Calu3 (cell line): ENCODE measurements at regions of chr15 and their contacts with region 1.

Region 1: DNA sequence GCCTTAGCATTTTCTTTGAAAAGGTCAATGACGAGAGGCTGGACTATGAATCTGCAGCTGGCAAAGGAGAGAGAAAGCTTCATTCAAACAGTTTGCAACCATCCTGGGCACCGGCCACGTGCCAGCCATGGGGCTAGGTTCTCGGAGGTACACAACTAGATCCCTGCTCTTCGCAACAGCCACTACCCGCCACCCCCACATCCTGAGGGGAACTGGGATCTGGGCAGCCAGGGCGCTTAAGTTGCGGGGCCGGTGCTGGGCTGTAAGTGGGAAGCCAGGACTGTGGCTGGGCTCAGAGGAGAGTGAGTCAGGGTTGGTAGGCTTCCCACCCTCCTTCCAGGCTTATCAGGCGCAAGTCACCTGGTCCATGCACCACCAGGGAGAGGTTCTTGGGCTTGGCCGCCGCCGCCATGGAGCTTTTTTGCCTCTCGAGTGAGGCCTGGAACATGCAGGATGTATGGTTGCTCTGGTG is 95.0 kb upstream of the TERB2 start:
- DNase-seq: no peak
- H3K4me3 Mint-ChIP-seq: no peak overlapping the region
- H3K27ac Mint-ChIP-seq: no peak overlapping the region
- H3K4me1 Mint-ChIP-seq: peaks cover 9% of the 10 kb centered on the region
- H3K27me3 Mint-ChIP-seq: peaks cover 5% of the 10 kb centered on the region
- CTCF ChIP-seq: no peak

Region 2: DNA sequence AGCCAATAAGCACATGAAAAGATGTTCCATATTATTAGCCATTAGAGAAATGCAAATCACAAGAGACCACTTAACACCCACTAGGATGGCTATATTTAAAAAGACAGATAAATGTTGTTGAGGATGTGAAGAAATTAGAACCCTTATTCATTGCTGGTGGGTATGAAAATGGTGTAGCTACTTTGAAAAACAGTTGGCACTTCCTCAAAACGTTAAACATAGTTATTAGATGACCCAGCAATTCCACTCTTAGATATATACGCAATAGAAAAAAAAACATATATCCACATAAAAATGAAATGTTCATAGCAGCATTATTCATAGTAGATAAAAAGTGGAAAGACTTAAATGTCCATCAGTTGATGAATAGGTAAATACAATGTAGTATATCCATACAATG is 47.9 kb after region 1 on chr15:
- CTCF ChIA-PET with region 1: no interaction called
- intact Hi-C with region 1: loop called (anchors 5 kb)
- DNase-seq: no peak
- H3K4me3 Mint-ChIP-seq: no peak overlapping the region
- H3K27ac Mint-ChIP-seq: no peak overlapping the region
- H3K4me1 Mint-ChIP-seq: peaks cover 8% of the 10 kb centered on the region
- H3K27me3 Mint-ChIP-seq: no peaks in the 10 kb centered on the region
- CTCF ChIP-seq: no peak